HCT116 (cell line): ENCODE measurements at regions of chr12 and their contacts with region 1.

Region 1: DNA sequence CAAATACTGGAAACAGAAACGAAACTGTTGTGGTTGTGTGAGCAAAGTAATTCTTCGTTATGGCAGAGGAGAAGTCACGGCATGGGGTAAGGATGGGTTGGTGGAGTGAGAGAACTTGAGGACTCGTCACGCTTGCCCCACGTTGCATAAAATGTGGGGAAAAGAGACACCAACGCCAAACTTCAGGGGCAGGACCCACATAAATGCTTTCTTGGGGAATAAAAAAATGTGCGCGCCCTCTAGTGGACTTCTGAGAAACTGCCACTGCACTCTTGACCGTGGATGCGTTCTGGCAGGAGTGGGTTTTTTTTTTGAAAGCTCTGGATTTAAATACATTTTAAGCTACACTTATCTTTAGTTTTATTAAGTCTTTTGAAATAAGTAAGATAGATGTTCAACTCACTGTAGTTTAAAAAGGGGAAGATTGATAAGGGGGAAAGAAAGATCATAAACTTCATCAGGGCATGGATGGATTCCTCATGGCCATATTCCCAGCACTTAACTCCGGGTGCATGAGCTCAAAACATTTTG is 4.1 kb upstream of the IGF1 start:
- DNase-seq: peak; percentile 34
- ATAC-seq: peak; percentile 78
- H3K4me3 ChIP-seq: no peak overlapping the region
- H3K27ac ChIP-seq: no peak overlapping the region
- H3K4me1 ChIP-seq: no peaks in the 10 kb centered on the region; a peak in 1 of 4 replicates
- H3K27me3 ChIP-seq: no peaks in the 10 kb centered on the region
- CTCF ChIP-seq: peak; percentile 60 to 89 (median 84)
- POLR2A ChIP-seq: no peak
- RAD21 ChIP-seq: peak; percentile 69

Region 2: DNA sequence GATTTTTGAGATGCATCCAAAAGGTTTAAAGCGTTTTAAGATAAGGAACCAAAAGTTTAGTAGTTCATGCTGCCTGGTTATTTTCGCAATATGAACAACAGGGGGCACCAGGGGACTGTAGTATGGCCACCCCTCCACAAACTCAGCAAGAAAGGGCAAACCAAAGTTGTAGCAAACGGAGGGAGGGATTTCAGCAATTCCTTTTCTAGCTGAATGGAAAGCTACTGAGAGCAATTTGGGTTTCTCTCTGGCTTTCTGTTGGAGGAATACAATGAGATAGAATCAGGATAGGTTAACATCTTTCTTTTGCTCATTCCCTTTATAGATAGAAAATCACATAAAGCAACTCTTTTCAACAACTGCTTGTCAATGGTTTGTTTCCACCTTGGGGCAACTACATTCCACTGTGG is 544.6 kb before region 1 on chr12:
- CTCF ChIA-PET with region 1: interaction called, 3 read pairs
- POLR2A ChIA-PET with region 1: no interaction called
- RAD21 ChIA-PET with region 1: no interaction called
- intact Hi-C with region 1: loop called (anchors 2 kb)
- DNase-seq: peak; percentile 51
- ATAC-seq: peak; percentile 93
- H3K4me3 ChIP-seq: no peak overlapping the region
- H3K27ac ChIP-seq: no peak overlapping the region
- H3K4me1 ChIP-seq: no peaks in the 10 kb centered on the region
- H3K27me3 ChIP-seq: peaks cover 38% of the 10 kb centered on the region
- CTCF ChIP-seq: peak; percentile 78 to 84 (median 82)
- POLR2A ChIP-seq: no peak
- RAD21 ChIP-seq: peak; percentile 95

Region 3: DNA sequence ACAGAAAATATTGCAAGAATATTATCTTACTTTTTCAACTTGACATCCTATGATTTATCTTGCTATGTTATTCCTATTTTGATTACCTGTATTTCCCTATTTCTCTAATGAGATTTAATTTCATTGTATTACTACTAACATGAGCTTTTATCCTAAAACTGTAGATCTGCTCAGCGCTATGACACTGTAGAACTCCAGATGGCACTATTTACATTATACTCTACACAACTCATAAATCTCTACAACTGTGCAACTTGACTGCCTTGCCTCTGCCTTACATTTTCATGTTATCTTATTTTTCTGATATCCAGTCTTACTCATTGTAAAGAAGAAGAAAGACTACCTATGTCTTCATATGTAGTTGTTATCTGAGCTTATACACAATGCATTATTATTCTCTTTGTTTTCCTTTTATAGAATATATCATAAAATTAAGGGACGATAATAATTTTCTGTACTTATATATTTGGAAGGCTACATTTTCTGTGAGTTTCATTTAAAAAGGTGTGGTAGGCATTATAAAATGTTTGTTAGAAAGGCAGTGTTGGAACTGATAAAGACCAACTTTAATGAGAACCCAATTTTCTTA is 388.7 kb before region 1 on chr12:
- CTCF ChIA-PET with region 1: interaction called, 12 read pairs
- POLR2A ChIA-PET with region 1: no interaction called
- RAD21 ChIA-PET with region 1: interaction called in 1 of 2 experiments, 3 read pairs
- intact Hi-C with region 1: loop called (anchors 2 kb)
- DNase-seq: no peak
- ATAC-seq: peak; percentile 79
- H3K4me3 ChIP-seq: no peak overlapping the region
- H3K27ac ChIP-seq: no peak overlapping the region
- H3K4me1 ChIP-seq: no peaks in the 10 kb centered on the region
- H3K27me3 ChIP-seq: no peaks in the 10 kb centered on the region
- CTCF ChIP-seq: peak; percentile 31 to 65 (median 44); a peak in 5 of 6 replicates
- POLR2A ChIP-seq: no peak
- RAD21 ChIP-seq: peak; percentile 52

Region 4: DNA sequence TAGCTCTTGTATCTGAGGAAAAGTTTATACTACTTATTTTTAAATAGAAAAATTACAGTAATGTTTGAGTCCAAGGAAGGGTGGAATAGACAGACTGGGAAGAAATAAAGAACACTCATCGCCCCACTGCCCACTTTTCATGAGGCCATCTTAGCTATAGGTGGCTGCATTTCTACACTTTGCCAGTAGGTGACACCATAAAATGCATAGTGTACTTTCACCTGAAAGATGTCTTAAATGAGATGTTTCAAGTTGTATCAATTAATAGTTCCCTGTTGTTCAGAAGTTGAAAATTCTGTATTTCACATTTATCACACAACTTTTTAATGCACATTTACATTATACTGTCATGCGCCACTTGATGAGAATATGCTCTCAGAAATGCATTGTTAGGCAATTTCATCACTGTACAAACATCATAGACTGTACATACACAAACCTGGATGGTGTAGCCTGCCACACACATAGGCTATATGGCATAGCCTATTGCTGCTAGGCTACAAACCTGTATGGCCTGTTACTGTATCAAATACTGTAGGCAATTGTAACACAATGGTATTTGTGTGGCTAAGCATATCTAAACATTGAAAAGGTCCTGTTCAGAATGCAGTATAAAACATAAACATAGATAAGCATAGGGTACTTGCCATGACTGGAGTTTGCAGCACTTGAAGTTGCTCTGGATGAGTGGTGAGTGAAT is 314.4 kb before region 1 on chr12:
- CTCF ChIA-PET with region 1: interaction called, 10 read pairs
- POLR2A ChIA-PET with region 1: no interaction called
- RAD21 ChIA-PET with region 1: no interaction called
- intact Hi-C with region 1: loop called (anchors 2 kb)
- DNase-seq: peak; percentile 4
- ATAC-seq: peak; percentile 78
- H3K4me3 ChIP-seq: no peak overlapping the region
- H3K27ac ChIP-seq: no peak overlapping the region
- H3K4me1 ChIP-seq: no peaks in the 10 kb centered on the region
- H3K27me3 ChIP-seq: no peaks in the 10 kb centered on the region
- CTCF ChIP-seq: peak; percentile 24 to 66 (median 61); a peak in 5 of 6 replicates
- POLR2A ChIP-seq: no peak
- RAD21 ChIP-seq: peak; percentile 59

Region 5: GRCh38 chr12:102300824-102301461 is 183.6 kb before region 1 on chr12:
- CTCF ChIA-PET with region 1: no interaction called
- POLR2A ChIA-PET with region 1: no interaction called
- RAD21 ChIA-PET with region 1: no interaction called
- intact Hi-C with region 1: loop called (anchors 5 kb)
- DNase-seq: peak; percentile 53
- ATAC-seq: peak; percentile 99
- H3K4me3 ChIP-seq: no peak overlapping the region
- H3K27ac ChIP-seq: no peak overlapping the region
- H3K4me1 ChIP-seq: no peaks in the 10 kb centered on the region
- H3K27me3 ChIP-seq: no peaks in the 10 kb centered on the region
- CTCF ChIP-seq: peak; percentile 39 to 65 (median 44); a peak in 4 of 6 replicates
- POLR2A ChIP-seq: no peak
- RAD21 ChIP-seq: peak; percentile 60

Region 6: DNA sequence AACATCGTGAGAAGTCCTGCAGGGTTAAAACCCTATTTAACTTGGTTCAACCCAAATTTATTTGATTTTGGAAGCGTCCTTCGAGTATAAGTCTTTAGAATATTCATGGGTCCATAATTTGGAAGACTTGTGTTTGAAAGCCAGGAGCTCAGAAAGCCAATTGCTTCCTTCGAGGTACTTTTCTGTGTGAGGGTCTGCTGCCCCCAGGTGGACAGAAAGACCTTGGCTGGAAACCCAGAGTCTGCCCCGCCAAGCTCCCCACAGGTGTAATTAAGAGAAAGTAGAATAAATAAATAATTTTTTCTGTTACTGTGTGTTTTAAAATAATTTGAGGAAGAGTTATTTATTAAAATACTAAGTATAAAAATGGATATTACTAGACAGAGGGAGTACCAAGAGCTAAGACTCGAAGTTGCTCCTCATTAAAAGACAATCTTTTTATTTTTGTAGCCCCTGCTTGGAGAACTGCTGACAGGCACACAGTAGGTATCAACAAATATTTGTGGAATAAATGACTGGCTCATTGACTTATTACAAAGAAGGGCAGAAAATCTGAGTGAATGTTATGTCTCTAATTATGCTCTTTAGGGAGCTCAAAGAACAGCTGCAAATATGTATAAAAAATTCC is 326.7 kb after region 1 on chr12:
- CTCF ChIA-PET with region 1: interaction called, 6 read pairs
- POLR2A ChIA-PET with region 1: no interaction called
- RAD21 ChIA-PET with region 1: no interaction called
- intact Hi-C with region 1: loop called (anchors 5 kb)
- DNase-seq: peak; percentile 12
- ATAC-seq: peak; percentile 64
- H3K4me3 ChIP-seq: no peak overlapping the region
- H3K27ac ChIP-seq: no peak overlapping the region
- H3K4me1 ChIP-seq: peaks cover 0 to 6% of the 10 kb centered on the region in 2 experiments; a peak in 1 of 4 replicates
- H3K27me3 ChIP-seq: peaks cover 8% of the 10 kb centered on the region; the same call in 1 of the 2 replicates
- CTCF ChIP-seq: peak; percentile 33 to 73 (median 59); a peak in 5 of 6 replicates
- POLR2A ChIP-seq: no peak
- RAD21 ChIP-seq: peak; percentile 66